Heart left ventricle (tissue), 16 donors: ENCODE measurements at regions of chr11 and their contacts with region 1.

Region 1: GRCh38 chr11:61581030-61581928 is at the start of gene SYT7:
- DNase-seq: peak; percentile 95 to 97 (median 96)
- ATAC-seq: peak; percentile 70 to 84 (median 84)
- H3K4me3 ChIP-seq: peak within 1 kb of the TSS; percentile 44 to 83 (median 62)
- H3K27ac ChIP-seq: peak within 1 kb of the TSS; percentile 26 to 92 (median 78)
- H3K4me1 ChIP-seq: peaks cover 0 to 36% (median 14%) of the 10 kb centered on the region in 12 donors
- H3K27me3 ChIP-seq: peaks cover 0 to 36% (median 2%) of the 10 kb centered on the region in 9 donors
- CTCF ChIP-seq: peak in 5 of 12 donors; percentile 3 to 17 (median 9)
- POLR2A ChIP-seq: peak in 1 of 2 donors; percentile 49
- total RNA-seq, gene SYT7: 12.4 to 22.7 (median 17.4) TPM

Region 2: DNA sequence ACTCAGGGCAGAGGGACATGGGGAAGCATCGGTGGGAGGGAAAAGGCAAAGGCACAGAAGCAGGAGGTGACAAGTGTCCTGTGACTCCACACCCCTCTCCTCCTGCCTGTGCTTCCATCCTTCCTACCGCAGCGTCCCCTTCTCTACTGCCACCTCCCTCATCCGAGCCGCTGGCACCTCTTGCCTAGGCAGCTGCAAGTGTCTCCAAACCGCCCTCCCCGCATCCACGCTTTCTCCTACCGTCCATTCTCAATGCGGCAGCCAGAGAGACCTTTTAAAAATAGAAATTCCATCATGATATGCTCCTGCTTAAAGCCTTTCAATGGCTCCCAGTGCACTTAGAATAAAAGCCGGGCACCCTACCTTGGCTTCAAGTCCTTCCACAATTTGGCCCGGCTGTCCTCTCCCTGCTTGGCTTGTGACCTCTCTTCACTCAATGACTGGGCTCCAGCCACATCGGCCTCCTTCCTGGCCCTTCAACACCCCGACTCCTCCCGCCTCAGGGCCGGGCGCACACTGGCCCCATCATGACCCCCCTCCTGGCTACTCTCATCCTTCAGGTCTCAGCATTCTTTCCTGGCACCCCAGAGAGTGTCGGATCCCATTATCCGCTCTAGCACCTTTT is 56.2 kb before region 1 on chr11:
- intact Hi-C with region 1: loop called in 3 of 10 experiments (anchors 5 kb)
- DNase-seq: peak in 1 of 5 donors; percentile 61
- ATAC-seq: peak; percentile 30 to 46 (median 36)
- H3K4me3 ChIP-seq: no peak overlapping the region
- H3K27ac ChIP-seq: peak overlapping the region in 7 of 12 donors; percentile 17 to 69 (median 46)
- H3K4me1 ChIP-seq: peaks cover 0 to 28% (median 0%) of the 10 kb centered on the region in 12 donors
- H3K27me3 ChIP-seq: no peaks in the 10 kb centered on the region
- CTCF ChIP-seq: no peak
- POLR2A ChIP-seq: no peak

Region 3: DNA sequence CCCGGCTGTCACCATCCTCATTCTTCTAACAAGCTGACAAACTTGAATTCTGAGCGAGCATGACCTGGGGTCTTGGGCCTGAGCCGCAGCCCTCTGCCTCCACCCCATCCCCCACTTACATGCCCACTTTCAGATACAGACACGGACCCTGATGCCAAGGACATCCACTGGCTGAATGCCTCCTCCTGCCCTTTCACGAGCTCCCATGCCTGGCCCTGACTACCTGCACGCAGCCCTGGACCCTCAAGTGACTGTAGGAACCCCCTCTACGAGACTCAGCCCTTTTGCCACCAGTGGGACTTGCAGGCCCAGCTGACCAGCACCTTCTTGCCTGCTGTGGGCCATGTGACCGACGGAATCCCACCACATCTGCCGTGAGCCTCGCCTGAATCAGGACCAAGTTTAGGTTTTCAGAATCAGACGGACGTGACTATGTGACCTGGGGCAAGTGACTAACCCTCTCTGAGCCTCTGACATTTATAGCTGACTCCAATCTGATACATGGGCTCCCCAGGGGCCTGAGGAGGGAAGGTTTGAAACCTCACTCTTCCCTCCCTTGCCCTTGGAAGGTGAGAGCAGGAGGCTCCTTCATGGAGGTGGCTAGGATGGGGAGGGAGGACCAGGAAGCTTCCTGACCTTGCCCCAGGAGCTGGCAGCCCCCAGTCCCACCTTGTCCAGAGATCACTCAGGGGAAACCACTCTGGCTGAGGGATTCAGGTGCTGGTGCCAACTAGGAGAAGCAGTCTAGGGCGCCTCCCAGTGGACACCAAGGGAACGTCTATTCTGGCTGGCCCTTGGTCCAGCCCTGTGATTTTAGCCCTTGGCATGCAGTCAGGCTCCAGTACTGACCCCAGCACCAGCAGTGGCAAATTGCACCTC is 46.5 kb after region 1 on chr11:
- intact Hi-C with region 1: loop called in 9 of 10 experiments (anchors 1 to 5 kb)
- DNase-seq: peak; percentile 71 to 81 (median 75)
- ATAC-seq: peak; percentile 51 to 84 (median 80)
- H3K4me3 ChIP-seq: no peak overlapping the region
- H3K27ac ChIP-seq: peak overlapping the region in 8 of 12 donors; percentile 81 to 94 (median 88)
- H3K4me1 ChIP-seq: peaks cover 0 to 24% (median 10%) of the 10 kb centered on the region in 12 donors
- H3K27me3 ChIP-seq: no peaks in the 10 kb centered on the region
- CTCF ChIP-seq: peak; percentile 58 to 89 (median 82)
- POLR2A ChIP-seq: no peak